Activated T-helper 2 cell treated with anti-CD3 and anti-CD28 coated beads, Interferon-gamma antibody, Interleukin-2, Interleukin-4, amounts not matched to agents 10 μg/mL and 5 μg/mL and 100 μg/mL, durations not matched to agents 14 hours and 24 hours and 36 hours (primary cell): ENCODE measurements at regions of chr7 and their contacts with region 1.

Region 1: GRCh38 chr7:32942786-32943653 is 14.2 kb upstream of the FKBP9 start:
- DNase-seq: peak; percentile 53
- H3K4me3 Mint-ChIP-seq: peak overlapping the region; percentile 63
- H3K27ac Mint-ChIP-seq: no peak overlapping the region
- H3K4me1 Mint-ChIP-seq: peaks cover 20% of the 10 kb centered on the region
- H3K27me3 Mint-ChIP-seq: peaks cover 7% of the 10 kb centered on the region

Region 2: GRCh38 chr7:32803406-32804141 is 139.4 kb before region 1 on chr7:
- intact Hi-C with region 1: loop called (anchors 1 kb)
- DNase-seq: no peak
- H3K4me3 Mint-ChIP-seq: no peak overlapping the region
- H3K27ac Mint-ChIP-seq: no peak overlapping the region
- H3K4me1 Mint-ChIP-seq: no peaks in the 10 kb centered on the region
- H3K27me3 Mint-ChIP-seq: peaks cover 3% of the 10 kb centered on the region

Region 3: DNA sequence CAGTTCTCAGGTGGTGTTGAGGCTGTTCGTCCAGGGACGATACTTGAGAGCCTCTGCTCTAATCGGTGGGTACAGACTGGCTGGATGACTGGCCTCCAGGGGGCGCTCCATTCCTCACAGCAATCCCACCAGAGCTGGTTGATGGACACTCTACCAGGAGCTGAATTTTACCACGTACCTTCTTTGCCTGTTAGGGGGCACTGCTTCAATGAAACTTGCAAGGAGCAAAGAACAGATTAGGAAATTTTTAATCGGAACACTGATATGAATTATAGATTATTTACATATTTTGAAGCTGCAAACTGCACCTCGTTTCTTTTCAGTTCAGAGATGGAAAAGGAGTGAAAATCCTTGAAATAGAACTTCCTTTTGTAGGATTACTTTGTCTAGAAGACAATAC is 96.3 kb before region 1 on chr7:
- intact Hi-C with region 1: loop called (anchors 1 kb)
- DNase-seq: peak; percentile 77
- H3K4me3 Mint-ChIP-seq: peak overlapping the region; percentile 14
- H3K27ac Mint-ChIP-seq: no peak overlapping the region
- H3K4me1 Mint-ChIP-seq: peaks cover 13% of the 10 kb centered on the region
- H3K27me3 Mint-ChIP-seq: peaks cover 26% of the 10 kb centered on the region

Region 4: DNA sequence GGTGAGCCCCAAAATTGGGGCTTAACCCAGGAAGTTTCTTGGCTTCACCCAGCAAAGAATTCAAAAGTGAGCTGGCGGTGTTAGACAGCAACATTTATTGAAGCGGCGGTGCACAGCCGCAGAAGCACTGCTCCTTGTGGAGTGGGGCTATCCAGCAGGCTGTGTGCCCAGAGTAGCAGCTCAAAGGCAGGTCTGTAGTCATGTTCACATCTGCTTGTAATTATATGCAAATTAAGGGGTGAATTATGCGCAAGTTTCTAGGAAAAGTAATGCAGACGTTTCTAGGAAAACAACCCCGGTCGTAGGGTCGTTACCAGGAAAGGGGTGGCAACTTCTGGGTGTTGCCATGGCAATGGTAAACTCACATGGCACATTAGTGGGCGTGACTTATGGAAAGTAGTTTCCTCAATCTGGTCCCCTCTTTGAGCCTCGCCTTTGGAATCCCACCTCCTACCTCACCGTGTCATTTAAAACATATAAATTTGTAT is 37.8 kb before region 1 on chr7:
- intact Hi-C with region 1: loop called (anchors 2 kb)
- DNase-seq: peak; percentile 83
- H3K4me3 Mint-ChIP-seq: peak overlapping the region; percentile 72
- H3K27ac Mint-ChIP-seq: peak overlapping the region; percentile 95
- H3K4me1 Mint-ChIP-seq: peaks cover 7% of the 10 kb centered on the region
- H3K27me3 Mint-ChIP-seq: no peaks in the 10 kb centered on the region

Region 5: GRCh38 chr7:32957326-32958045 is 14.5 kb after region 1 on chr7 and contains the start of gene FKBP9:
- intact Hi-C with region 1: loop called (anchors 2 kb)
- DNase-seq: peak; percentile 14
- H3K4me3 Mint-ChIP-seq: peak within 1 kb of the TSS; percentile 83
- H3K27ac Mint-ChIP-seq: no peak within 1 kb of the TSS
- H3K4me1 Mint-ChIP-seq: peaks cover 4% of the 10 kb centered on the region
- H3K27me3 Mint-ChIP-seq: peaks cover 24% of the 10 kb centered on the region
- total RNA-seq, gene FKBP9: 3.0 and 3.5 TPM in 2 replicates

Region 6: DNA sequence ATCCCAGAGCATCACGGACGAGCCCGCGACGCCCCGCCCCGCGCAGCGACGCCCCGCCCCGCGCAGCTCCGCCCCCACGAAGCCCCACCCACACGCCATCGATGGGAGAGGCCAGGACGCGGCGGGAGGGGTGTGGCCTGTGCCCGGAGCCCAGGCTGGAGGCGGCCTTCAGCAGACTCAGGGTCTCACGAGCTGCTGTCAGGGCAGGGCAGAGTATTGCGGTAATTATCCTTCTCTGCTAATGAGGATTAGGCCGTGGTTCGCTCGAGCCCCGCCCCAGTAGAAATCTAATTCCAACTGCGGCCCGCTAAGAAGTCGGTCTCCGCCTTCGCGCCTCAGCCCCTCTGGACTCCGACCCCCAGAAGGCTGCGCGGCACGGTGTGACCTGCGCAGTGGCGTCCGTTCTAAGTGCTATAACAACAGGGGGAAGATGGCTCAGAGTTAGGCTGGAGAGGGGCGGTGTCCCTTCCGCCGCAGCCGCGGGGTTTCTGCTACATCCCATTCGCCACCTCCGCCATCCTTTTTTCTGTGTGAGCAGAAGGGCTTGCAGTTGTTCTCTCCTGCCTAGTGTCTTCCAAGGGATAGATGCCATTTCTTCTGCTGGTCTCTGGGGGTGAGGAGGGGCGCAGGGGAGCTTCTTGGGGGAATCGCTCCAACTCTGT is 119.9 kb after region 1 on chr7:
- intact Hi-C with region 1: loop called (anchors 2 kb)
- DNase-seq: peak; percentile 90
- H3K4me3 Mint-ChIP-seq: peak overlapping the region; percentile 94
- H3K27ac Mint-ChIP-seq: peak overlapping the region; percentile 89
- H3K4me1 Mint-ChIP-seq: peaks cover 35% of the 10 kb centered on the region
- H3K27me3 Mint-ChIP-seq: peaks cover 2% of the 10 kb centered on the region